ENCODE measurements at regions of chr2 and their contacts with region 1.

Region 1: DNA sequence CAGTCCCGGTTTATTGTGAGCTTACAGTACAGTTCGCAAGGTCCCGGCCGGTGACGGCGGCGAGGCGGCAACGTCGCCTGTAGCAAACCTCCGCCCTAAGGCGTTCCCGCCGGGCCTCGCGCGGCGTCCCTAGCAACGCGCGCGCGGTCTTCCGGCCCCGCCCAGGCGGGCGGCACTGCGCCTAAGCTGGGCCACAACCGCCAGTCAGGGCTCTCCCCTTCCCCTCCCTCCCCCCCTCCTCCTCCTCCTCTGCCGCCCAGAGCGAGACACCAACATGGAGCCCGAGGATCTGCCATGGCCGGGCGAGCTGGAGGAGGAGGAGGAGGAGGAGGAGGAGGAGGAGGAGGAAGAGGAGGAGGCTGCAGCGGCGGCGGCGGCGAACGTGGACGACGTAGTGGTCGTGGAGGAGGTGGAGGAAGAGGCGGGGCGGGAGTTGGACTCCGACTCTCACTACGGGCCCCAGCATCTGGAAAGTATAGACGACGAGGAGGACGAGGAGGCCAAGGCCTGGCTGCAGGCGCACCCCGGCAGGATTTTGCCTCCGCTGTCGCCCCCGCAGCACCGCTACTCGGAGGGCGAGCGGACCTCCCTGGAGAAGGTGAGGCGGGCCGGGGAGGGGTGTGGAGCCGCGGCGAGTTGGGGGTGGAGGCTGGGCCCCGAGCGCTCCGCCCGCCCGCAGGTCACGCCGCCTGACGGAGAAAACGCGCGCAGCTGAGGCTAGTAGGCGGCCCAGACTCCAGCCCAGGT is at the start of gene ALMS1:
- DNase-seq: peak; percentile 97
- H3K4me3 Mint-ChIP-seq: peak within 1 kb of the TSS; percentile 92
- H3K27ac Mint-ChIP-seq: peak within 1 kb of the TSS; percentile 93
- H3K4me1 Mint-ChIP-seq: peaks cover 23% of the 10 kb centered on the region
- H3K27me3 Mint-ChIP-seq: peaks cover 8% of the 10 kb centered on the region
- total RNA-seq, gene ALMS1: 19.6 and 21.9 TPM in 2 replicates

Region 2: GRCh38 chr2:73212448-73213176 is 173.2 kb before region 1 on chr2:
- intact Hi-C with region 1: loop called (anchors 5 kb)
- DNase-seq: peak; percentile 91
- H3K4me3 Mint-ChIP-seq: no peak overlapping the region
- H3K27ac Mint-ChIP-seq: peak overlapping the region; percentile 34
- H3K4me1 Mint-ChIP-seq: peaks cover 22% of the 10 kb centered on the region
- H3K27me3 Mint-ChIP-seq: peaks cover 6% of the 10 kb centered on the region

Region 3: GRCh38 chr2:73284296-73285158 is 101.2 kb before region 1 on chr2 and contains the start of gene FBXO41:
- intact Hi-C with region 1: loop called (anchors 2 kb)
- DNase-seq: peak; percentile 93
- H3K4me3 Mint-ChIP-seq: peak within 1 kb of the TSS; percentile 85
- H3K27ac Mint-ChIP-seq: peak within 1 kb of the TSS; percentile 78
- H3K4me1 Mint-ChIP-seq: peaks cover 22% of the 10 kb centered on the region
- H3K27me3 Mint-ChIP-seq: peaks cover 20% of the 10 kb centered on the region
- total RNA-seq, gene FBXO41: 32.2 and 33.8 TPM in 2 replicates

Region 4: DNA sequence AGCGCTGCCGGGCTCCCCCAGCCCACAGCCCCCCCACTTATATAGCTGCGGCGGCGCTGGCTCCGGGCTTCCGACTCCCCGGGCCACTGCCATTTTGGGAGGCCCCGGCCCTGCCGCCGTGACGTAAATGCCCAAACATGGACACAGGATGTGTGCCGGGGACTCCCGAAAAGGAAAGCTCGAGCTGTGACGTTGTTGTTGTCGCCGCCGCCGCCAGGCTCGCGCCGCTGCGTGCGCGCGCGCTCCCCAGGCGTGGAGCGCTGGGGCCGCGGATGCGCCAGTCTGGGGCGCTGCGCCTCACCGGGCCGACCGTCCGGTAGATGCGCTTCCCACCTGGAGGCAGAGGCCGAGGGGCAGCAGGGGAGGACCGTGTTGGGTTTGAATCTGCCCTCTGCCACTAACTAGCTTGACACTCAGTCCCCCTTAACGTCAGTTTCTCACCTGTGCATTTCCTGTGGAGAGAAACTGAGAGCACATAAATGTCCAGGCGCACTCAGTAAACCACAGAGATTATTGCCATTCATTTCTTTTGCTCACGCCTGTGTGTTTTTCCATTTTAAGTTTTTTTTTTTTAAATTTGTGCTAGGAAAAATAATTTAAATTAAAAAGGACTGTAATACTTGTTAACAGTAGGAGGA is 92.1 kb before region 1 on chr2 and contains the start of gene EGR4:
- intact Hi-C with region 1: loop called (anchors 1 kb)
- DNase-seq: peak; percentile 98
- H3K4me3 Mint-ChIP-seq: peak within 1 kb of the TSS; percentile 81
- H3K27ac Mint-ChIP-seq: no peak within 1 kb of the TSS
- H3K4me1 Mint-ChIP-seq: peaks cover 13% of the 10 kb centered on the region
- H3K27me3 Mint-ChIP-seq: peaks cover 74% of the 10 kb centered on the region
- total RNA-seq, gene EGR4: 1.2 and 1.5 TPM in 2 replicates

Region 5: GRCh38 chr2:73324126-73324725 is 61.5 kb before region 1 on chr2:
- intact Hi-C with region 1: no loop called
- DNase-seq: peak; percentile 18
- H3K4me3 Mint-ChIP-seq: no peak overlapping the region
- H3K27ac Mint-ChIP-seq: no peak overlapping the region
- H3K4me1 Mint-ChIP-seq: no peaks in the 10 kb centered on the region
- H3K27me3 Mint-ChIP-seq: peaks cover 21% of the 10 kb centered on the region

Region 6: DNA sequence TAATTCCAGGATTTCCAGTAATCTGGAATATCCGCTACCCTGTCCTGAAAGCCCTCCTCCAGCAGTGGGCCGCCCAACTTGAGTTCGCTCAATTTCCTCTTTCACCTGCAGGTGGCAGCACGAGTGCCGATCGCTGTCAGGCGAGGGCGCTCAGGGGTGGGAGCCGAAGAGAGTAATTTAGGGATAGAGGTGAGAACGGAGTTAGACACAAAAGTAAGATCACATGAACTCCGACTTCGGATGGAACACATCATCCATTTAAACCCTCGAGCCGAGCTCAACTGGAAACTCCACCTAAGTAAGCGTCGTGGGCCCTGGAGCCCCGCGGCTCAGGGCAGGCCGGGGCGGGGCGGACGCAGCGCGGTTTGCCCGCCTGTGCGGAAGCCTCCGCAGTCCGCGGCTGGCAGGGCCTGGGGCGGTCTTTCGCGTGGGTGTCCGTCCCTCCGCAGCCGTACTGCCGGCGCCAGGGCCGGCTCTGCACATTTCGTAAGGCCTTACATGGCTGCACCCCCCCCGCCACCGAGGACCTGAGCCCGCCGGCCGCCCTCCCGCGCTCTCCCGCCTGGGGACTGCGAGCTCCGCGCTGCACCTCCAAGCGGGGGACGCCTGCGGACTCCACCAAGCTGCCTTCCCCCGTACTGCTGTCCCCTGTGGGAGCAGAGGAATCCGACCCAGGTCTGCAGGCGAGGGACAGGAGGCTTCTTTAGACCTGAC is 1329.5 kb after region 1 on chr2:
- intact Hi-C with region 1: loop called (anchors 5 kb)
- DNase-seq: peak; percentile 95
- H3K4me3 Mint-ChIP-seq: peak overlapping the region; percentile 92
- H3K27ac Mint-ChIP-seq: peak overlapping the region; percentile 26
- H3K4me1 Mint-ChIP-seq: peaks cover 7% of the 10 kb centered on the region
- H3K27me3 Mint-ChIP-seq: peaks cover 25% of the 10 kb centered on the region

Measured in activated CD4-positive, alpha-beta T cell treated with anti-CD3 and anti-CD28 coated beads, Interleukin-2, amount 10 ng/mL, durations not matched to agents 24 days and 14 days (primary cell).